Activated naive CD4-positive, alpha-beta T cell treated with anti-CD3 and anti-CD28 coated beads, Interleukin-2, amount 10 ng/mL, durations not matched to agents 7 days and 5 days (primary cell): ENCODE measurements at regions of chr1 and their contacts with region 1.

Region 1: DNA sequence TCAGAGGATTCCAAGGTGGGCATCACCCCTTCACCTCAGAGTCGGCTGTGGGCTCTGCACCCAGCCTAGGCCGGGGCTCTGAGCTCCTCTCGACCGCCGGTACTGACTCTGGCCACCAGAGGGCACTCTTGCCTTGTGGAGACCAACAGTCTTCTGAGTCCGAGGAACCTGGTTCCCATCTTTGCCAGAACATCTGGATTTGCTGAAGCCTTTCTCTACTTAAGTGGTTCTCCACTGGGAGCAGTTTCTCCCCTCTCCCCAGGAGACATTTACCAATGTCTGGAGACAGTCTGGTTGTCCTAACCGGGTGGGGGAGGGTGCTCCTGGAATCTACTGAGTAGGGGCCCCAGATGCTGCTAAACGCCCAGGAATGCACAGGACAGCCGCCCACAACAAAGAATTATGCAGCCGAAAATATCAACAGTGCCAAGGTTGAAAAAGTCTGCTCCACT is 9.4 kb downstream of the ETV3L start:
- DNase-seq: peak; percentile 90
- H3K4me3 Mint-ChIP-seq: no peak overlapping the region
- H3K27ac Mint-ChIP-seq: no peak overlapping the region
- H3K4me1 Mint-ChIP-seq: no peaks in the 10 kb centered on the region
- H3K27me3 Mint-ChIP-seq: peaks cover 26% of the 10 kb centered on the region

Region 2: GRCh38 chr1:156129706-156130581 is 960.3 kb before region 1 on chr1:
- CTCF ChIA-PET with region 1: no interaction called
- DNase-seq: peak; percentile 87
- H3K4me3 Mint-ChIP-seq: no peak overlapping the region
- H3K27ac Mint-ChIP-seq: no peak overlapping the region
- H3K4me1 Mint-ChIP-seq: peaks cover 51% of the 10 kb centered on the region
- H3K27me3 Mint-ChIP-seq: peaks cover 54% of the 10 kb centered on the region

Region 3: DNA sequence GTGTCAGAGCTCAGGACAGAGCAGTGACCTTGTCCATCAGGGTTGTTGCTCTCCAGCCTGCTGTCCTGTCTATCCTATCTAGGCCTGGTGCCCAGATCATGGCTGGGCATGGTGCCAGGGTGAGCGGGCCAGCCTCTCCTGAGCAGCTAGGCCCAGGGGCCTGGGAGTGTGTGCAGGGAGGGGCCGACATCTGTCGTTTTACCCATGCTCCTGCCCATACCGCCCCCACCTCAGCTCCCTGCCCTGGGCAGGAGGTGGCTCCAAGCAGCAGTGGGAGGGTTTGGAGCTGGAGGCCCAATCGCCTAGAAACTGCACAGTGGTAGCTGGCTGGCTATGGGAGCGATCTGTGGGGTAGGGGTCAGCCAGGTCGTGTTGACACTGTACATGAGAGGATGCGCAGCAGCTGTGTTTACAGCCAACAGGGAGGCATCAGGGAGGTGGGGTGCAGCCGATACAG is 237.8 kb before region 1 on chr1:
- CTCF ChIA-PET with region 1: no interaction called
- DNase-seq: no peak
- H3K4me3 Mint-ChIP-seq: no peak overlapping the region
- H3K27ac Mint-ChIP-seq: no peak overlapping the region
- H3K4me1 Mint-ChIP-seq: peaks cover 21% of the 10 kb centered on the region
- H3K27me3 Mint-ChIP-seq: peaks cover 74% of the 10 kb centered on the region

Region 4: GRCh38 chr1:157000686-157001085 is 89.5 kb before region 1 on chr1:
- CTCF ChIA-PET with region 1: no interaction called
- DNase-seq: no peak
- H3K4me3 Mint-ChIP-seq: no peak overlapping the region
- H3K27ac Mint-ChIP-seq: no peak overlapping the region
- H3K4me1 Mint-ChIP-seq: no peaks in the 10 kb centered on the region
- H3K27me3 Mint-ChIP-seq: peaks cover 36% of the 10 kb centered on the region

Region 5: GRCh38 chr1:157040802-157041201 is 49.4 kb before region 1 on chr1:
- CTCF ChIA-PET with region 1: no interaction called
- DNase-seq: no peak
- H3K4me3 Mint-ChIP-seq: no peak overlapping the region
- H3K27ac Mint-ChIP-seq: no peak overlapping the region
- H3K4me1 Mint-ChIP-seq: peaks cover 4% of the 10 kb centered on the region
- H3K27me3 Mint-ChIP-seq: peaks cover 78% of the 10 kb centered on the region

Region 6: DNA sequence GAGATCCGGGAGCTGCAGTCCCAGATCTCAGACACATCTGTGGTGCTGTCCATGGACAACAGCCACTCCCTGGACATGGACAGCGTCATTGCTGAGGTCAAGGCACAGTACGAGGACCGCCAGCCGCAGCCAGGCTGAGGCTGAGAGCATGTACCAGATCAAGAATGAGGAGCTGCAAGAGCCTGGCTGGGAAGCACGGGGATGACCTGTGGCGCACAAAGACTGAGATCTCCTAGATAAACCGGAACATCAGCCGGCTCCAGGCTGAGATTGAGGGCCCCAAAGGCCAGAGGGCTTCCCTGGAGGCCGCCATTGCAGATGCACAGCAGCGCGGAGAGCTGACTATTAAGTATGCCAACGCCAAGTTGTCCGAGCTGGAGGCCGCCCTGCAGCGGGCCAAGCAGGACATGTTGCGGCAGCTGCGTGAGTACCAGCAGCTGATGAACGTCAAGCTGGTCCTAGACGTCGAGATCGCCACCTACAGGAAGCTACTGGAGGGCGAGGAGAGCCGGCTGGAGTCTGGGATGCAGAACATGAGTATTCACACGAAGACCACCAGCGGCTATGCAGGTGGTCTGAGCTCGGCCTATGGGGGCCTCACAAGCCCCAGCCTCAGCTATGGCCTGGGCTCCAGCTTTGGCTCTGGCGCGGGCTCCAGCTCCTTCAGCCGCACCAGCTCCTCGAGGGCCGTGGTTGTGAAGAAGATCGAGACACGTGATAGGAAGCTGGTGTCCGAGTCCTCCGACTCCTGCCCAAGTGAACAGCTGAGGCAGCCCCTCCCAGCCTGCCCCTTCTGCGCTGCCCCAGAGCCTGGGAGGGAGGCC is 16.1 kb before region 1 on chr1:
- CTCF ChIA-PET with region 1: interaction called, 16 read pairs
- DNase-seq: peak; percentile 60
- H3K4me3 Mint-ChIP-seq: no peak overlapping the region
- H3K27ac Mint-ChIP-seq: no peak overlapping the region
- H3K4me1 Mint-ChIP-seq: no peaks in the 10 kb centered on the region
- H3K27me3 Mint-ChIP-seq: peaks cover 32% of the 10 kb centered on the region

Region 7: DNA sequence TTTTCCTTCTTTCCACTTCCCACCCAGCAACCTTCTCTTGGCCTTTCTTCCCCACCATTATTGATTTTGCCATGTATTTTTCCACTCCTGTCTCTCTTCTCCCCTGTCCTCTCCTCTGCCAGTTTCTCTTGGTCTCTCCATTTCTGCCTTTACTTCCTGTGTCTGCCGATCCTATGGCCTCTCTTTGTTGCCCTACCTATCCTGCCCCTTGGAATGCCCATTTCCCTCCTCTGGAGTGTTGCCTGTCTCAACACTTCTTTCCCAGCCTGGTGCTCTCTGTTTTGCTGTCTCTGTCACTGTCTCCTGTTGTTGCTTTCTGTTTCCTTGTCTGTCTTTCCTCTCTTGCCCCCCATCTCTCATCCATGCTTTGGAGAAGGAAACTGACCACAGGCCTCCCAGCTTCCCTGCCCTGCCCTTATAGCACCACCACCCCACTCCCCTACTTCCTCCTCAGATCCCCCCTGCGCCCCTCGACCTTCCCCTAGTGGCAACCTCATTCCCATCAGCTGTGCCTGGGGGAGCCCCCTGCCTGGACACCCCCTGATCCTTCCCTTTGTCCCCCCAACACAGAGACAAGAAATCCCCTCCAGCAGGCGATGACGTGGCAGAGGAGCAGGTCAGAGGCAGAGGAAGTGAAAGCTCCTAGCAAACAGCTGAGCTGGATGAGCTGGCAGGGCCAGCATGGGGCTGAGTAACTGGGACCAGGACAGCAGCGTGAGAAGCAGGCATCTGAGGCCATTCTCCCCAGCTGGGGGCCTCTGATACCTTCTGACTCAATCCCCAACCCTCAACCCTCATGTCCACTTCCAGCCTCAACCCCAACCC is 16.0 kb after region 1 on chr1:
- CTCF ChIA-PET with region 1: interaction called, 21 read pairs
- DNase-seq: peak; percentile 27
- H3K4me3 Mint-ChIP-seq: no peak overlapping the region
- H3K27ac Mint-ChIP-seq: no peak overlapping the region
- H3K4me1 Mint-ChIP-seq: peaks cover 6% of the 10 kb centered on the region
- H3K27me3 Mint-ChIP-seq: peaks cover 90% of the 10 kb centered on the region

Region 8: GRCh38 chr1:157133426-157133825 is 43.2 kb after region 1 on chr1:
- CTCF ChIA-PET with region 1: interaction called, 23 read pairs
- DNase-seq: no peak
- H3K4me3 Mint-ChIP-seq: peak overlapping the region; percentile 21
- H3K27ac Mint-ChIP-seq: peak overlapping the region; percentile 86
- H3K4me1 Mint-ChIP-seq: peaks cover 73% of the 10 kb centered on the region
- H3K27me3 Mint-ChIP-seq: no peaks in the 10 kb centered on the region

Region 9: GRCh38 chr1:157138220-157139051 is 48.2 kb after region 1 on chr1 and contains the start of gene ETV3:
- CTCF ChIA-PET with region 1: interaction called, 23 read pairs
- DNase-seq: peak; percentile 94
- H3K4me3 Mint-ChIP-seq: peak within 1 kb of the TSS; percentile 97
- H3K27ac Mint-ChIP-seq: peak within 1 kb of the TSS; percentile 93
- H3K4me1 Mint-ChIP-seq: peaks cover 56% of the 10 kb centered on the region
- H3K27me3 Mint-ChIP-seq: peaks cover 10% of the 10 kb centered on the region

Region 10: GRCh38 chr1:157156058-157156541 is 65.9 kb after region 1 on chr1:
- CTCF ChIA-PET with region 1: interaction called, 491 read pairs
- DNase-seq: peak; percentile 81
- H3K4me3 Mint-ChIP-seq: no peak overlapping the region
- H3K27ac Mint-ChIP-seq: no peak overlapping the region
- H3K4me1 Mint-ChIP-seq: peaks cover 32% of the 10 kb centered on the region
- H3K27me3 Mint-ChIP-seq: peaks cover 52% of the 10 kb centered on the region